ENCODE measurements at regions of chr19 and their contacts with region 1.

Region 1: GRCh38 chr19:12092065-12092867 is 27.7 kb downstream of the ZNF844 start:
- DNase-seq: peak; percentile 47
- H3K4me3 ChIP-seq: peak overlapping the region; percentile 64
- H3K27me3 ChIP-seq: no peaks in the 10 kb centered on the region
- CTCF ChIP-seq: no peak

Region 2: DNA sequence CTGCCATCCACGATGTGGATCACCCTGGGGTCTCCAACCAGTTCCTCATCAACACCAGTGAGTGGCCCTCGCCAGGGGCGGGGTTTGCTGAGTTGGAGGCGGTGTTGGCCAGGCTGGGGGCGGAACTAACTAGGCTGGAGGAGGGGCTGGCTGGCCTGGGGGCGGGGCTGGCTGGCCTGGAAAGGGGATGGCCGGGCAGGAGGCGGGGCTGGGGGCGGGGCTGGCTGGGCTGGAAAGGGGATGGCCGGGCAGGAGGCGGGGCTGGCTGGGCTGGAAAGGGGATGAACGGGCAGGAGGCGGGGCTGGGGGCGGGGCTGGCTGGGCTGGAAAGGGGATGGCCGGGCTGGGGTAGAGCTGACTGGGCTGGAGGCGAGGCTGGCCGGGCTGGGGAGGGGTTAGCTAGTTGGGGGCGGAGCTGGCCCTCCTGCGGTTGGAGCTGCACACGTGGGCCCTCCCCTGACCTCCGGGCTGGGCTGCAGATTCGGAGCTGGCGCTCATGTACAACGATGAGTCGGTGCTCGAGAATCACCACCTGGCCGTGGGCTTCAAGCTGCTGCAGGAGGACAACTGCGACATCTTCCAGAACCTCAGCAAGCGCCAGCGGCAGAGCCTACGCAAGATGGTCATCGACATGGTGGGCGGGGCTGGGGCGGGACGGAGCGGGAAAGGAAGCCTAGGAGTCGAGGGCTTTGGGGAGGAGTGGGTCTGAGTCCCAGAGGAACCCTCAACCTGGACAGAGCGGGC is 1631.0 kb before region 1 on chr19:
- CTCF ChIA-PET with region 1: no interaction called
- POLR2A ChIA-PET with region 1: interaction called, 34 read pairs
- DNase-seq: peak; percentile 64
- H3K4me3 ChIP-seq: peak overlapping the region; percentile 38
- H3K27me3 ChIP-seq: no peaks in the 10 kb centered on the region
- CTCF ChIP-seq: no peak